HCT116 (cell line): ENCODE measurements at regions of chr16 and their contacts with region 1.

Region 1: GRCh38 chr16:85305996-85306792 is 193.9 kb upstream of the CIBAR2 start:
- DNase-seq: peak; percentile 65
- ATAC-seq: peak; percentile 80
- H3K4me3 ChIP-seq: peak overlapping the region; percentile 15 to 28
- H3K27ac ChIP-seq: peak overlapping the region; percentile 29
- H3K4me1 ChIP-seq: peaks cover 45 to 55% of the 10 kb centered on the region in 2 experiments
- H3K27me3 ChIP-seq: no peaks in the 10 kb centered on the region
- CTCF ChIP-seq: no peak
- POLR2A ChIP-seq: peak; percentile 46
- RAD21 ChIP-seq: no peak

Region 2: DNA sequence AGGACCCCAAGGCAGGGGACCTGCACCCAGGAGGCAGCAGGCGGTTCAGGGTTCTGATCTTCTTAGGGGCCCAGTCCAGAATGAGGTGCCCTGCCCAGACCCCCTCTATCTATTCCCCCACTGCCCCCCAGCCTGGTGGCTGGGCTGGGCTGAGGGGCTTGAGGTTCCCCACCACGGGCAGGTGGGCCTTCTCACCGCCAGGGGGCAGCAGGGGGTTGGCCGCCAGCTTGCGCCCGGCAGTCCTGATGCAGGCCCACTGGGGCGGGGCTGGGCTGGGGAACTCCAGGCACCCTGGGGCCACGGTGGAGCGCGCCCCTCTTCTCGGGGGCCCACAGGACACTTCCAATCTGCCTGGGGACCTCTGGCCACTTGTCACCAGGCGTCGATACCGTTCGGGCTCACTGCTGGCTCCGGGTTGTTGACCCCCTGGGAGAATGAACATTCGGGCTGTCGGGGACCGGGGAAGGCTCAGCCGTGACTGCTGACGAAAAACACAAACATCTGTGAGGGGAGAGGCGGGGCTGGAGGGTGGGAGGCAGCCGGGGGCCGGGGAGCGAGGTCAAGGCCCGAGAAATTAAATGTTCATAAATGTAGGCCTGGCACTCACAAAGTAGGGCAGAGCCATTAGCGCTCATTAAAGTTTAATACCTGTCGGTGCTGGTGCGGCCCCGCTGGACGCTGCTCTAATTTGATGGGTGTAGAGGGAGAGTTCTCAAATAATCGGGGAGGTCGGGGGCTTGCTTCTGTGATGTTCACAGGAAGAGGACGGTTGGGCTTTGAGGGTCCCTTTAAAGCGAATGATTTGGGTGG is 87.7 kb after region 1 on chr16:
- CTCF ChIA-PET with region 1: interaction called, 3 read pairs
- POLR2A ChIA-PET with region 1: interaction called, 3 read pairs
- RAD21 ChIA-PET with region 1: no interaction called
- intact Hi-C with region 1: loop called (anchors 5 kb)
- DNase-seq: no peak
- ATAC-seq: peak; percentile 54
- H3K4me3 ChIP-seq: no peak overlapping the region
- H3K27ac ChIP-seq: no peak overlapping the region; the same call in 1 of the 2 replicates
- H3K4me1 ChIP-seq: peaks cover 58 to 72% of the 10 kb centered on the region in 2 experiments
- H3K27me3 ChIP-seq: no peaks in the 10 kb centered on the region
- CTCF ChIP-seq: peak in 2 of 3 experiments; percentile 100; a peak in 4 of 6 replicates
- POLR2A ChIP-seq: no peak
- RAD21 ChIP-seq: no peak